Cardiac septum (tissue), 1 donor: ENCODE measurements at regions of chr20 and their contacts with region 1.

Region 1: GRCh38 chr20:5529331-5530148 is 212.8 kb upstream of the PROKR2 start:
- DNase-seq: peak; percentile 93

Region 2: GRCh38 chr20:5480824-5481600 is 48.5 kb before region 1 on chr20:
- intact Hi-C with region 1: no loop called
- DNase-seq: no peak

Region 3: DNA sequence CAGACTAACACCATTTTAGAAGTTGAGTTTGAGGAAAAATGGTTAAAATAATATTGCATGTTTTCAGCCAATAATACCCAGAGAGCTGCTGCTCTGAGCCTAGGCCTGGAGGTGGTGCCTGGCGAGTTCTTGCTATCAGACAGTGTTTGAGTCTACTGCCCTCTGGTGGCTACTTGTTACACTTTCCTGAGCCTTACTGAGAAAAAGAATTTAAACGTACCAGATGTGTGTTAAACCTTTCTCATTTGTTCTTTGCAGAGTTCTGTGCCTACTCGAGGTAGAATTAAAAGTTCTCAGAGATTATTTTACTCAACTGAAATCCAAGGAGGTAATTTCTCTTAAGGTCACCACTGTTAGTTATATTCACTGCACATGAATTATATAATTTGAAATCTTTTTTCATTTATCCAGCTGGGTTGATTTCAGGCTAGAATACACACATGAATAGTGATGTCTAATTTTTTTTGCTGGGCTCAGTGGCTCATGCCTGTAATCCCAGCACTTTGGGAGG is 258.9 kb after region 1 on chr20:
- intact Hi-C with region 1: loop called (anchors 1 kb)
- DNase-seq: peak; percentile 82

Region 4: GRCh38 chr20:5933802-5934436 is 404.4 kb after region 1 on chr20:
- intact Hi-C with region 1: loop called (anchors 10 kb)
- DNase-seq: no peak

Region 5: GRCh38 chr20:6362245-6362644 is 832.7 kb after region 1 on chr20:
- intact Hi-C with region 1: no loop called
- DNase-seq: no peak